Activated T-helper 1 cell treated with anti-CD3 and anti-CD28 coated beads, Interleukin-12 subunit alpha, Interleukin-12 subunit beta, Interleukin-2, Interleukin-4 antibody, amounts not matched to agents 30 ng/mL and 10 ng/mL and 1 ng/mL, durations not matched to agents 14 hours and 24 hours and 36 hours (primary cell): ENCODE measurements at regions of chr16 and their contacts with region 1.

Region 1: DNA sequence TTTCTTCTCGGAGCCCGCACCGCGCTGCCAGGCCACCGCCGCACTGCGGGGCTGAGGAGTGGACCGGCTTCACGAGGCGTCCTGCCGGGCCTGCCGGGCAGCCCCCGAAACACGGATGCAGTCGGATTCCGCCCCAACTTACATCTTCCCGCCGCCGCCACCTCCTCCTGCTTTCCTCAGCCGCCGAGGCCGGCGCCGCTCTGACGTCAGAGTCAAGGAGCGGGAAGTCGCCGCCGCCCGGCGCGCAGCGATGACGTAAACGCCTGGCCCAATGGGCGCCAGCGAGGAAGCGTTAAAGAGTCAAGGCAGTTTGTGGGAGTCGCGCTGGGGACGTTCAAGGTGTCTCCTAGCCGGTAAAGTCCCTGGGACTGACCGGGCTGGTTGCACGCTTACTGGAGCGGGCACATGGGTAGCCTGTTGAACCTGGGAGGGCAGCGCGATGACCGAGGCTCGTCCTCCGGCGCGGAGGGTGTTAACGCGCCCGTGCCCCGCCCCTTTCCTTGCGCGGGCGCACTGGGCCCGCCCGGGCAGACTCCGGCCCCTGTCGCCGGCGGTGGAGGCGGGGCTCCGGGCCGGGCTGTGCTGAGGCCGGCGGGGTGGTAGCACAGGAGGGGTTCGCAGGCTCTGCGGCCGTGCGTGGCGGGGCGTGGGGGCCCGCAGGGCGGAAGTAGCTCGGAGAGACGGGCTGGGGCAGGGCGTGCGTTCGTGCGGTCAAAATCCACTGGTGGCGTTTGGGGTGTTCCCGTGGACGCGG is at the start of gene RNPS1:
- DNase-seq: peak; percentile 96
- H3K4me3 Mint-ChIP-seq: peak within 1 kb of the TSS; percentile 94
- H3K27ac Mint-ChIP-seq: peak within 1 kb of the TSS; percentile 98
- H3K4me1 Mint-ChIP-seq: peaks cover 41% of the 10 kb centered on the region
- H3K27me3 Mint-ChIP-seq: peaks cover 2% of the 10 kb centered on the region
- total RNA-seq, gene RNPS1: 398 and 403 TPM in 2 replicates

Region 2: DNA sequence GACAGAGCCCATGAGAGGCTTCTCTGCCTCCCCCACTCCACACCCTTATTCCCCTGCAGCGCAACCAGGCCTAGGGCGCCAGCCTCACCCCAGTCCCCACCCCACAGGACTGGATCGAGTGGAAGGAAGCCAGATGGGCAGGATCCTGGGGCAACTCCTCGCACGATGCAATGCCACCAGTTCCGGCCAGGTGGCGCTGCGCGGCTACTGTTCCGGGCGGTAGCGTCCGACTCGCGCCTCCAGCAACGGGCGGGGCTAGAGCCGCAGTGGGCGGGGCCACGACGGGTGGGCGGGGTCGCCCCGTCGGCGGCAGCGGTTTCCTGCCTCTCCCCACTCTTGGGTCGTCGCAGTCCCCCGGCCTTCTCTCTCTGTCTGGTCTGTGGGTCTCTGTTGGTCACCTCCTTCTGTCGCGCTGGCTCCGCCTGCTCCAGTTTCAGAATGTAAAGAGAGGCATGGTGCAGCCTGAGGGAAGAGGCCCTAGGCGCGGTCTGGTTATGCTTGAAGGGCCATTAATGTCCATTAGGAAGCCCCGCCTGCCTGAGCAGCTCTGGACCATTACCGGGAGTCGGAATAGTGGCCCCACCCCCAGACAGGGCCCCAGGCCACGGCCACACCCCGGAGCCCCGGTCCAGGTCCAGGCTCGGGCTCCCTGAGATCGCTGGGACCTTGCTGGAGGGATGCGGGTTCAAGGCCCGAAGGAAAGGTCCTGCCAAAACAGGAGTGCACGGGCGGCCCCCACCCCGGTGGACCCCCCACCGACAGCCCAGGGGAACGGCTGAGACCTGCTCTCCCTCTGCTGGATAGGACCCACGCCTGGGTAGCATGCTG is 244.8 kb before region 1 on chr16:
- intact Hi-C with region 1: loop called (anchors 10 kb)
- DNase-seq: peak; percentile 92
- H3K4me3 Mint-ChIP-seq: peak overlapping the region; percentile 77
- H3K27ac Mint-ChIP-seq: no peak overlapping the region
- H3K4me1 Mint-ChIP-seq: peaks cover 16% of the 10 kb centered on the region
- H3K27me3 Mint-ChIP-seq: peaks cover 37% of the 10 kb centered on the region

Region 3: DNA sequence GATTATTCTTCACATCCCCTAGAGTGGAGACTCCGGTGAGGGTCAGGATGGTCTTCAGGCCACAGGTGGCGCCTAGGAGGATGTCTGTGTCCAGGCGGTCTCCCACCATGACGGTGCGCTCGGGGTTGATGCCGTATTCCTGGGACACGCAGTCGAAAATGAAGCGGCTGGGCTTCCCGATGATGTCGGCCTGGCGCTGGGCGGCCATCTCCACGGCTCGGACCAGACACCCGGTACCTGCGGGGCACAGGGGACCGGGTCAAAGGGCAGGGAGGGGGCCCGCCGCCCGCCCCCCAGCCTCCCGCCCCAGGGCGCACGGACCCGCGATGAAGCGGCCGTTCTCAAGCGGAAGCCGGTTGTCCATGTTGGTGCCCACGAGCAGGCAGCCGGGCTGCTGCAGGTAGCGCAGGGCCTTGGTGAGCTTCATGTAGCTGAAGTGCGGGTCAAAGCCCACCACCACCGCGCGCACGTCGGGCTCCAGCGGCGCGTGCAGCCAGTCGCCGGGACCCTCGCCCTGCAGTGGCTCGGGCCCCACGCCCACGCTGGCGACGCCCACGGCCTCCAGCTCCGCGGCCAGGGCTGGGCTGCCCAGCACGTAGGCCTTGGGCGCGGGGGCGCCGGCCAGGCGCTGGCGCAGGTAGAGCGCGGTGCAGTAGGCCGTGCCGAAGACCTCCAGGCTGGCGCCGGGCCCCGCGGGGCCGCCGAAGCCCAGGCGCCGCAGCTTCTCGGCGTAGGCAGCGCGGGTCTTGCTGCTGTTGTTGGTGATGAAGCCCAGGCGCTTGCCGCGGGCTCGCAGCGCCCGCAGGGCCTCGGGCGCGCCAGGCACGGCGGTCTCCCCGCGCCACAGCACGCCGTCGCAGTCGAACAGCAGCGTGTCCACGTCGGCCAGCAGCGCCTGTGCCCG is 54.0 kb before region 1 on chr16:
- intact Hi-C with region 1: loop called (anchors 2 kb)
- DNase-seq: no peak
- H3K4me3 Mint-ChIP-seq: peak overlapping the region; percentile 87
- H3K27ac Mint-ChIP-seq: peak overlapping the region; percentile 65
- H3K4me1 Mint-ChIP-seq: peaks cover 18% of the 10 kb centered on the region
- H3K27me3 Mint-ChIP-seq: no peaks in the 10 kb centered on the region

Region 4: GRCh38 chr16:2251483-2252240 is 16.4 kb before region 1 on chr16 and contains the start of gene ECI1:
- intact Hi-C with region 1: loop called (anchors 1 kb)
- DNase-seq: peak; percentile 80
- H3K4me3 Mint-ChIP-seq: peak within 1 kb of the TSS; percentile 91
- H3K27ac Mint-ChIP-seq: peak within 1 kb of the TSS; percentile 94
- H3K4me1 Mint-ChIP-seq: peaks cover 10% of the 10 kb centered on the region
- H3K27me3 Mint-ChIP-seq: no peaks in the 10 kb centered on the region
- total RNA-seq, gene ECI1: 35.5 and 36.5 TPM in 2 replicates

Region 5: GRCh38 chr16:2429034-2429770 is 161.1 kb after region 1 on chr16 and contains the start of gene CCNF:
- intact Hi-C with region 1: loop called (anchors 1 kb)
- DNase-seq: peak; percentile 95
- H3K4me3 Mint-ChIP-seq: peak within 1 kb of the TSS; percentile 99
- H3K27ac Mint-ChIP-seq: peak within 1 kb of the TSS; percentile 88
- H3K4me1 Mint-ChIP-seq: peaks cover 27% of the 10 kb centered on the region
- H3K27me3 Mint-ChIP-seq: no peaks in the 10 kb centered on the region
- total RNA-seq, gene CCNF: 45.3 and 46.7 TPM in 2 replicates

Region 6: GRCh38 chr16:2531767-2532493 is 263.8 kb after region 1 on chr16:
- intact Hi-C with region 1: loop called (anchors 5 kb)
- DNase-seq: peak; percentile 97
- H3K4me3 Mint-ChIP-seq: peak overlapping the region; percentile 100
- H3K27ac Mint-ChIP-seq: peak overlapping the region; percentile 100
- H3K4me1 Mint-ChIP-seq: peaks cover 9% of the 10 kb centered on the region
- H3K27me3 Mint-ChIP-seq: no peaks in the 10 kb centered on the region